Right ventricle myocardium inferior (tissue), 1 donor: ENCODE measurements at regions of chr5 and their contacts with region 1.

Region 1: GRCh38 chr5:148443998-148444397 is 60.2 kb downstream of the FBXO38 start:
- DNase-seq: no peak
- ATAC-seq: peak; percentile 83

Region 2: GRCh38 chr5:148186248-148186996 is 257.6 kb before region 1 on chr5:
- intact Hi-C with region 1: loop called (anchors 10 kb)
- DNase-seq: no peak
- ATAC-seq: no peak

Region 3: GRCh38 chr5:148290271-148291195 is 153.5 kb before region 1 on chr5:
- intact Hi-C with region 1: loop called (anchors 2 kb)
- DNase-seq: no peak
- ATAC-seq: no peak

Region 4: DNA sequence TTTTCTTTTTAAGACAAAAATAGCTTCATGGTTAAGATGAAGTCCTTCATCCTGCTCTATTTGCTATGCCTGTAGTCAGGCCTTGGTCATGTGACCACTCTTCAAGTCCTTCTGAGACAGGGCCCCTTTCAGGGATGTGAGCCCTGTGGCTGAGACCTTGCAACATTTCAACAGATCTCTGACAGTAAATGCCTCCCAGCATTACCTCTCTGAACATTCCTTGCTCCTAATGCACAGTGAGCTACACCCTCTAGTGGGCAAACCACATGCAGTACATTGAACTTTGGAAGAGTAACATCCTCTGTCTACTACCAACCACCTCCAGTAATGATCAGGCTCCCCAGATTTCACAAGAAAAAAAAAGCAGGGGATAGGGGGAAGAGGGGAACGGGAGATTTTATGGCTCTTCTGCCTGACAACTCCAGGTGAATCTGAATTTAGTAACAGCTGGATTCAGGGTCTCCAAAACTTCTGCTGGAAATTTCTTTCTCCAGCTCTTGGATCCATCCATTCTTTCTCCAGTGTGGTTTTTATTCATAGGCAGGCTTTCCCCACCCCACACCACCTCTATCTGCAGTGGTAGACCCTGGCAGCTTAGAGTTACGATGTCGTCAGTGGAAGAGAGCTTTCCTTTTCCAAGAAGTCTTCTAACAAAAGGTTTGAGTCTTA is 69.2 kb before region 1 on chr5:
- intact Hi-C with region 1: no loop called
- DNase-seq: no peak
- ATAC-seq: peak; percentile 48

Region 5: DNA sequence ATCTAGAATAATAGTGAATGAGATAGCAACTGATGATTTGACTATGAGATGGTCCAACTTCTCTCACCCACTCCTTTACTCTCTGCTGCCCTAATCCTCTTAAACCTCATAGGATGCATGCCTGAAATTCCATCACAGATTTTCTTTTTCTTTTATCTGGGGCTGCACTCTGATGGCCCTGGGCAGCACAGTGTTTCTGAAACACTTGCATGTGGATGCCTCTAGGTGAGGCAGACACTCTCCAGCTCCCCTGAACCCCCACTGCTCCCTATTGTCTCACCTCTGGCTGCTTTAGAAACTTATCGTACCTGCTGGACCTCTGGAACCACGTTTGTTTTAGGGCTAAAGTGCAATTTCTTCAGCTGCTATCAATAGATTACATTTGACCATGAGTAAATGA is 142.8 kb after region 1 on chr5:
- intact Hi-C with region 1: no loop called
- DNase-seq: no peak
- ATAC-seq: no peak

Region 6: GRCh38 chr5:149035372-149035790 is 591.4 kb after region 1 on chr5:
- intact Hi-C with region 1: loop called (anchors 10 kb)
- DNase-seq: peak; percentile 86
- ATAC-seq: peak; percentile 79